Thyroid gland (tissue), 4 donors: ENCODE measurements at regions of chr17 and their contacts with region 1.

Region 1: GRCh38 chr17:44344939-44345453 is at the start of gene GRN:
- DNase-seq: peak; percentile 97 to 98
- H3K4me3 ChIP-seq: peak within 1 kb of the TSS; percentile 46 to 88 (median 82)
- H3K27ac ChIP-seq: peak within 1 kb of the TSS; percentile 40 to 88 (median 83)
- H3K4me1 ChIP-seq: peaks cover 6 to 14% of the 10 kb centered on the region in 2 donors
- H3K27me3 ChIP-seq: no peaks in the 10 kb centered on the region
- CTCF ChIP-seq: no peak
- POLR2A ChIP-seq: peak; percentile 69 to 96
- total RNA-seq, gene GRN: 259 to 292 (median 264) TPM

Region 2: DNA sequence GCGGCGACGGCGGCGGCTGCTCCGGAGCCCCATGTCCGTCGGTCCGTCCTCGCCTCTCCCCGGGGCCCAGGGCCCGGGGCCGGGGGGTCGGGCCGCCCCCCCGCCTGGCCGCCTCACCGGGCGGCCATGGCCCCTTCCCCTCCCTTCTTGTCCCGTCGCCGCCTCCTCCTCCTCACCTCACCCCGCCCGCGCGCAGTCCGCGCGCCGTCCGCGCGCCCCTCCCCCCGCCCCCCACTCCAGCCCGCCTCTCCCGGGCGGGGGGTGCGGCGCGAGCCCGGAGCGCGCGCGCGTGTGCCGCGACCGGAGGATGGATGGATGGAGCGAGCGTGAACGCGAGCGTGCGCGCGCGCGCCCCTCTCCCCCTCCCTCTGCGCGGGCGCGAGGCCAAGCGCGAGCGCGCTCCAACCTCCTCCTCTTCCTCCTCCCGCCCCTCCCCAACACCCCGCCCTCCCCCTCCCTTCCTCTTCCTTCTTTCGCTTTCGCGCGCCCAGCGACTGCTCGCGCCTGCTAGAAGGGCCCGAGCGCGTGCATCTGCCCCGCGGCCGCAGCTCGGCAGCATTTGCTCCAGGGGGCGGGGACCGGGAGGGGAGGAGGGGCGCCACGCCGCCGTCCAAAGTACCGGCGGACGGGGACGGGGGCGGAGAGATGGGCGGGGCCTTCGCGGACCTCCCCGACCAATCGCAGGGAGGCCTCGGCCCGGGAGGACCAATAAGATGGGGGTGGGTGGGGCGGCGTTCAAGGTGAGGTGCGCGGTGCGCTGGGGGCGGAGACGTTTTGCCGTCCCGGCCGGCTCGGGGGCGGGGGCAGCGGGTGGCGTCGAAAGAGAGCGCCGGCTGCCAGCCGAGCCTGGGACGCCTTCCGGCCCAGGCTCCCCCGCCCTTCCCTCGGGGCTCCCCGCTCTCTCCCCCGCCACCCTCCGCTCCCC is 145.2 kb before region 1 on chr17 and contains the start of gene ATXN7L3:
- intact Hi-C with region 1: loop called (anchors 5 kb)
- DNase-seq: peak; percentile 100
- H3K4me3 ChIP-seq: peak within 1 kb of the TSS; percentile 72 to 85 (median 79)
- H3K27ac ChIP-seq: peak within 1 kb of the TSS; percentile 89 to 97 (median 96)
- H3K4me1 ChIP-seq: peaks cover 11 to 19% of the 10 kb centered on the region in 2 donors
- H3K27me3 ChIP-seq: no peaks in the 10 kb centered on the region
- CTCF ChIP-seq: no peak
- POLR2A ChIP-seq: peak in 1 of 2 donors; percentile 22
- total RNA-seq, gene ATXN7L3: 52.4 to 64.5 (median 58.0) TPM